WTC11 (cell line): ENCODE measurements at regions of chr19 and their contacts with region 1.

Region 1: DNA sequence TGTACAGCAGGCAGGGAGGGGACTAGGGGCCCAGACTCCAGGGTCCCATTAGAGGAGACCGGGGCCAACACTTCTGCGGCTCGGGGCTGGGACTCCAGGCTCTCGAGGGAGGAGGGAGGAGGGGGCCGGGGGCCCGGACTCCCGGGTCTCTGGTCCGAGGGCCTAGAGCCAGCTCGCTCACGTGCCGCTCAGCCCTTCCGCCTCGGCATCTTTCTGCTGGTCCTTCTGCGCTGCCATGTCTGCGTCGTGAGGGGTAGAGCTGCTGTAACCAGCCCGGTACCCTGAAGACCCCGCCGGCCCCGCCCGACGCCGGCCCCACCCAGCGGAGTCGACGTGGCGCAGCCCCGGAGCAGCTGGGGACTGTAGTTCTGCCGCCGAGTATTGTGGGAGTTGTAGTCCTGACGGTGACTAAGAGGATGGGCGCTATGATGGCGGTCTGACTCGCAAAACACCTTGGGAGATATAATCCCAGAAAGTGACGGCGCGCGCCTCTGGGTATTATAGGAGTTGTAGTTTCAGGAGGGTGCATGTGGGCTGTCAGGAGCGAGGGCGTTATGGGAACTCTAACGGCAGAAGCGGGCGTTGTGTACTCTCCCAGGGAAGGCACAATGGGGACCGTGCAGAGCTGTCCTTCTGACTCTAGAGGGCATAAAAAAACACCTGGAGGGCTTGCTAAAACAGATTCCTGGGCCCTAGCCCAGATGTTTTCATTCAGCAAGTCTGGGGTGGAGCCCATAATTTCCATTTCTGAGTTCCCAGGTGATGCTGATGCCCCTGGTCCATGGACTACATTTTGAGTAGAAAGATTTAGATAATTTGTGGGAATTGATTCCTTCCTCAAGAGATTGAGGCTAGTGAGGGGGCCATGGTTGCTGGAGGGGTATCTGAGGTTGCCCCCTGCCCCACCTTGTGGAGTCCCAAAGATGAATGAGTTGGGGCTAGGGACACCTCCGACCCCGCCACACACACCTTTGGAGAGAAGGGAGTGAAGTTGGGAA is at the start of gene RABAC1:
- DNase-seq: peak; percentile 97
- ATAC-seq: peak; percentile 85
- H3K4me3 Mint-ChIP-seq: peak within 1 kb of the TSS; percentile 78
- H3K27ac Mint-ChIP-seq: peak within 1 kb of the TSS; percentile 98
- H3K4me1 Mint-ChIP-seq: peaks cover 18% of the 10 kb centered on the region
- H3K27me3 Mint-ChIP-seq: no peaks in the 10 kb centered on the region
- CTCF ChIP-seq: no peak
- total RNA-seq, gene RABAC1: 159 to 184 TPM (median 159 TPM) in 3 replicates

Region 2: DNA sequence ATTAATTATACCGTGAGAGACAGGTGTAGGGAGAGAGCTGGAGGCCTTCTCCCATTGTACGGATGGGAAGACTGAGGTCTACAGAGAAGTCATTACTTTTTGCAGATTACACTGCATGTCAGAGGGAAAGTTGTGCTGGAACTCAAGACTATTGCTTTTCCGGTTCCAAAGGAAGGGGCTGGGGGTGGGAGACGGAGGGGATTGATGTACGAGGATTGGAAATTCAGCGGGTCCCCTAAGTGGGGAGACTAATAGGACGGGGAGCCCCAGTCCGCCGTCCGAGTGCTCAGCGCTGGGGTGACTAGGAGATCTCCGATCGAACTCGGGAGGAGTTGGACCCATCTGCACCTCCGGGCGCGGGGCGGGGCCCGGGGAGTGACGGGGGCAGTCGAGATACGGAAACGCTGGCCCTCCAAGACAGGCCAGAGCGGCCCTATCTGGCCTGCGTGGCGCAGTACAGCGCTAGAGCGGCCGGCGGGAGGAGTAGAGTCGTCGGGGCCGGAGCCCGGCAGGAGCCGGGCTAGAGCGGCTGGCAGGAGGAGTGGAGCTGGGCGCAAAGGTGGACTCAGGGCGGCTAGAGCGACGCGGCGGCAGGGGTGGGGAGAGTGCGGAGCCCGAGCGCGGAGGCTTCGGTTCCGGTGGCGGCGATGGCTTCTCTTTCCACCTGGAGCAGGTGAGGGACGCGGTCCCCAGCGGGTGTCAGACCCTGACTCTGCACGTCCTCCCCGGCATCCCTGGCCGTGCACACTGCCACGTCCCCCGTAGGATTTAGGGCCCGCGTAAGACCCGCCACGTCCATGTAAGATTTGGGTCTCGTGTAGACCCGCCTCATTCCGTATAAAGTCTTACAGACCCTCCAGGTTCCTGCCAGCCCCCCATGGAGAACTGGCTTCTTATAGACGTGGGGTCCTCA is 75.3 kb before region 1 on chr19:
- CTCF ChIA-PET with region 1: interaction called, 14 read pairs
- POLR2A ChIA-PET with region 1: interaction called, 3 read pairs
- DNase-seq: peak; percentile 96
- ATAC-seq: peak; percentile 94
- H3K4me3 Mint-ChIP-seq: peak overlapping the region; percentile 94
- H3K27ac Mint-ChIP-seq: peak overlapping the region; percentile 79
- H3K4me1 Mint-ChIP-seq: peaks cover 43% of the 10 kb centered on the region
- H3K27me3 Mint-ChIP-seq: peaks cover 26% of the 10 kb centered on the region
- CTCF ChIP-seq: no peak

Region 3: DNA sequence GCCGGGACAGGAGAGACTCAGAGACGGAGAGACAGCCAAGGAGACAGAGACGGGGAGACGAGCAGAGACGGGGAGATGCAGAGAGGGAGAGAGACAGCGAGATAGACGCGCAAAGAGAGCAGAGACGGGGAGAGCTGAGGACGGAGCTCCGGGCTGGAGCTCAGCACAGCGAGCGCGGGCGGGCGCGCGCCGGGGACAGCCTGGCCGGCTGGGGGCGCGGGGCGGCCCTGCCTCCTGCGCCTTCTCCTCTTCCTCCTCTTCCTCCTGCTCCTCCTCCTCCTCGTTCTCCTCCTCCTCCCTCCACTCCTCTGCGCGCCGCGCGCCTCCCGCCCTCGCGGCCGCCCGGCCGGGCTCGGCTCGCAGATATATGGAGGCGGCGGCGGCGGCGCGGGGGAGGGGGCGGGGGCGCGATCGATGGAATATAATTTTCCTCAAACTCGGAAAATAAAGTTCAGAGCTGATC is 31.1 kb before region 1 on chr19 and contains the start of gene ERFL:
- CTCF ChIA-PET with region 1: interaction called, 12 read pairs
- POLR2A ChIA-PET with region 1: no interaction called
- DNase-seq: no peak
- ATAC-seq: peak; percentile 13
- H3K4me3 Mint-ChIP-seq: peak within 1 kb of the TSS; percentile 72
- H3K27ac Mint-ChIP-seq: no peak within 1 kb of the TSS
- H3K4me1 Mint-ChIP-seq: peaks cover 31% of the 10 kb centered on the region
- H3K27me3 Mint-ChIP-seq: peaks cover 47% of the 10 kb centered on the region
- CTCF ChIP-seq: no peak
- total RNA-seq, gene ERFL: 0.30 to 0.66 TPM (median 0.31 TPM) in 3 replicates

Region 4: GRCh38 chr19:41936416-41936850 is 22.9 kb before region 1 on chr19:
- CTCF ChIA-PET with region 1: interaction called, 12 read pairs
- POLR2A ChIA-PET with region 1: no interaction called
- DNase-seq: no peak
- ATAC-seq: no peak
- H3K4me3 Mint-ChIP-seq: no peak overlapping the region
- H3K27ac Mint-ChIP-seq: no peak overlapping the region
- H3K4me1 Mint-ChIP-seq: peaks cover 18% of the 10 kb centered on the region
- H3K27me3 Mint-ChIP-seq: peaks cover 79% of the 10 kb centered on the region
- CTCF ChIP-seq: no peak

Region 5: DNA sequence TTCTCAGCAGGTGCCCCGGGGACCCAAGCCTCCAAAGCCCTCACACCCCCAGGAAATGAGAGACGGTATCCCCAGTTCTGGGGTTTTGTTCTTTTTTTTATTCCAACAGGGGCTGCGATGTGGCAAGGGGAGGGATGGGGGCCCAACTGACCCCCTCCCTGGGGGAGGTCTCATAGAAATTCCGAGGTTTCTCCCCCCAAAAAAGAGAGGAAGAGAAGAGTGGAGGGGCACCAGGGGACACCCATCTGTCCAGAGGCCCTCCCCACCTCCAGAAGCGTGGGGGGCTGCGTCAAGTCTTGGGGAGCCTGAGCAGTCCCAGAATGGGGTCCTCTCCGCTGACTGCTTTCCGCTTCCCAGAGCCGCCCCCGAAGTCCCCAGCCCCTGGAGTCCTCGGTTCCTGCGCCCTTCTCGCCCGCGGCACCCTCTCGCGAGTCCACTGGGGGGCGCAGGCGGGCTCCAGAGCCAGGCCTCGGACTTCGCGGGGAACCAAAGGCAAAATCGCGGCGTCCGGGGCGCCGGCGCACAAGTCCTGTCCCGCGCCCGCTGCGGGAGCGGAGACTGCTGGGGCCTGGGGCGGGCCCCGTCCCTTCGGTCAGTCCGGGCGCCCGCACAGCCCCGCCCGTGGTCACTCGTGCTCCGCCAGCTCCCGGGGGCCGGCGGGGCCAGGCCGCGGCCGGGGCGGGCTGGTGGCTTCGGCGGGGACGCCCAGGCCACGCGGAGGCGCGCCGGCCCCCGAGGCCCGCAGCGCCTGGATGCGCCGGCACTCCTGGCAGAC is 39.1 kb after region 1 on chr19:
- CTCF ChIA-PET with region 1: interaction called, 14 read pairs
- POLR2A ChIA-PET with region 1: interaction called, 3 read pairs
- DNase-seq: peak; percentile 80
- ATAC-seq: peak; percentile 30
- H3K4me3 Mint-ChIP-seq: peak overlapping the region; percentile 72
- H3K27ac Mint-ChIP-seq: no peak overlapping the region
- H3K4me1 Mint-ChIP-seq: peaks cover 23% of the 10 kb centered on the region
- H3K27me3 Mint-ChIP-seq: peaks cover 69% of the 10 kb centered on the region
- CTCF ChIP-seq: peak; percentile 68